Motor neuron (in vitro differentiated cells): ENCODE measurements at regions of chr1 and their contacts with region 1.

Region 1: DNA sequence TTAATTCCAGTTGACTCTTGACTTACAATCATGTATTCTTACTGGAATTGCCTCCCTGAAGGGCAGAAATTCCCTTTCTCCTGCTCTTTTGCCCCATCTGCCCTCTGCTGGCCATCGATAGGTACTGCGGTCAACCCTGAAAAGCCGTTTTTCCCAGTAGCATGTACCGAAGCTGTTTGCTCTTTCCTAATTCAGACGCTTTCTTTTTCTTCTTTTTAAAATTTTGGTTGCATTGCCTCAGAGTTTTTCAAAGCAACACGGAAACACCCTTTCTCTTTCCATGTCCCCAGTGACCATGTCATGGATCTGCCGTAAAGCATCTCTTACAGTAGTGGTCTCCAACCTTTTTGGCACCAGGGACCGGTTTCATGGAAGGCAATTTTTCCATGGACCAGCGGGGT is 164.2 kb upstream of the C1orf21 start:
- ATAC-seq: peak in 2 of 8 experiments; percentile 47 to 60
- H3K4me3 ChIP-seq: no peak overlapping the region
- H3K27ac ChIP-seq: no peak overlapping the region
- H3K4me1 ChIP-seq: peaks cover 34 to 38% of the 10 kb centered on the region in 2 donors

Region 2: DNA sequence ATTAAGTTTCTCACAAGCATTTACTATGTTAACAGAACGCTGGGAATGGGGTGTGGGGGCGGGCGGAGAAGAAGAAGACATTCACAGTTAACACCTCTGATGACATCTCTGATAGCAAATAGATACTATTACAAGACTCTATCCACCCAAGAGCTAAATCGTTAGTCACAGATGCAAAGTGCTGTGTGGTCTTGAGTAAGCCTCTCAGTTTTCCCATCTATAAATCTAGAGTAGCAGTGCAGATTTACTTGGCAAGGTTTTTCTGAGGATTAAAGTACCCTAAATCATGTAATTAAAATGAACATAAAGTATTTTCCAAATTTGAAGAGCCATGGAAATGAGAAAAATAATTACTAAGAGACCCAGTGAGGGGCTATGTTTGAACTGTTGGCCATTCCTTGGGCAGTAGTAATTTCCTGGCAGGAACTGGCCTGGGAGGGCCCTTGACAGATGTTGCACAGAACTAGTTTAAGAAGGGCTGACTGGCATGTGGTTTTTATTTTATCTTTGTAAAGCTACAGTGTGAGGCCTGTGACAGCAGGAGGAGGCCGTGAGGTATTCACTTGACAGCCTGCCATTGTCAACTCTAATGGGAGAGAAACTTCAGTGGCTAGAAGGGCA is 510.8 kb before region 1 on chr1:
- in situ Hi-C with region 1: no loop called
- ATAC-seq: peak; percentile 31 to 97 (median 67)
- H3K4me3 ChIP-seq: no peak overlapping the region
- H3K27ac ChIP-seq: no peak overlapping the region
- H3K4me1 ChIP-seq: peaks cover 0 to 2% of the 10 kb centered on the region in 2 donors

Region 3: GRCh38 chr1:184075055-184076029 is 147.3 kb before region 1 on chr1:
- in situ Hi-C with region 1: loop called in 3 of 9 experiments (anchors 10 to 25 kb)
- ATAC-seq: peak; percentile 53 to 91 (median 70)
- H3K4me3 ChIP-seq: no peak overlapping the region
- H3K27ac ChIP-seq: no peak overlapping the region
- H3K4me1 ChIP-seq: no peaks in the 10 kb centered on the region

Region 4: GRCh38 chr1:184082541-184083415 is 139.9 kb before region 1 on chr1:
- in situ Hi-C with region 1: loop called in 3 of 9 experiments (anchors 10 to 25 kb)
- ATAC-seq: no peak
- H3K4me3 ChIP-seq: no peak overlapping the region
- H3K27ac ChIP-seq: no peak overlapping the region
- H3K4me1 ChIP-seq: no peaks in the 10 kb centered on the region